ENCODE measurements at regions of chr2 and their contacts with region 1.

Region 1: DNA sequence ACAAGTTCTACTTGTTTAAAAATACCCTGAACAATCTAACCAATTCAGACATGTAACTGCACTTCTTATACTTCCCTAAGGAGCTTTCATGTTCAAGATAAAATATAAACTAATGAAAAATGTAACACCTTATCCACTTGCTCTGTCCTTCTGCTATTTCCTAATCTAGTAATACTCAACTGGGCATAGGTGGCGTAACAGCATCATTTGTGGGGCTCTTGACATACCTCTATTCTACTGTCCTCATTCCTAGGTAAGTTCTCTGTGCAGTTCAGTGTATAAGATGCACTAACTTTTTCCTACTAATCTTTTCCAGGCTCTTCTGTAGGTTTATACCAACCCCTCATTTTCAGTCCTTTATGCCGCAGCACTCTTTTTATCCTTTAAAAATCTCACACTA is 36.7 kb downstream of the PRKD3 start:
- DNase-seq: peak; percentile 34
- ATAC-seq: peak; percentile 54
- H3K4me3 ChIP-seq: no peak overlapping the region
- H3K4me3 Mint-ChIP-seq: no peak overlapping the region
- H3K27ac ChIP-seq: no peak overlapping the region
- H3K27ac Mint-ChIP-seq: no peak overlapping the region
- H3K4me1 ChIP-seq: no peaks in the 10 kb centered on the region
- H3K4me1 Mint-ChIP-seq: peaks cover 14% of the 10 kb centered on the region
- H3K27me3 ChIP-seq: no peaks in the 10 kb centered on the region
- H3K27me3 Mint-ChIP-seq: no peaks in the 10 kb centered on the region
- CTCF ChIP-seq: no peak

Region 2: GRCh38 chr2:35731674-35732073 is 1556.3 kb before region 1 on chr2:
- CTCF ChIA-PET with region 1: no interaction called
- POLR2A ChIA-PET with region 1: no interaction called
- intact Hi-C with region 1: no loop called
- DNase-seq: no peak
- ATAC-seq: no peak
- H3K4me3 ChIP-seq: no peak overlapping the region
- H3K4me3 Mint-ChIP-seq: no peak overlapping the region
- H3K27ac ChIP-seq: no peak overlapping the region
- H3K27ac Mint-ChIP-seq: no peak overlapping the region
- H3K4me1 ChIP-seq: no peaks in the 10 kb centered on the region
- H3K4me1 Mint-ChIP-seq: no peaks in the 10 kb centered on the region
- H3K27me3 ChIP-seq: no peaks in the 10 kb centered on the region
- H3K27me3 Mint-ChIP-seq: no peaks in the 10 kb centered on the region
- CTCF ChIP-seq: no peak

Region 3: GRCh38 chr2:37125416-37125815 is 162.6 kb before region 1 on chr2:
- CTCF ChIA-PET with region 1: no interaction called
- POLR2A ChIA-PET with region 1: no interaction called
- intact Hi-C with region 1: no loop called
- DNase-seq: no peak
- ATAC-seq: no peak
- H3K4me3 ChIP-seq: no peak overlapping the region
- H3K4me3 Mint-ChIP-seq: no peak overlapping the region
- H3K27ac ChIP-seq: no peak overlapping the region
- H3K27ac Mint-ChIP-seq: no peak overlapping the region
- H3K4me1 ChIP-seq: no peaks in the 10 kb centered on the region
- H3K4me1 Mint-ChIP-seq: no peaks in the 10 kb centered on the region
- H3K27me3 ChIP-seq: no peaks in the 10 kb centered on the region
- H3K27me3 Mint-ChIP-seq: no peaks in the 10 kb centered on the region
- CTCF ChIP-seq: no peak

Region 4: DNA sequence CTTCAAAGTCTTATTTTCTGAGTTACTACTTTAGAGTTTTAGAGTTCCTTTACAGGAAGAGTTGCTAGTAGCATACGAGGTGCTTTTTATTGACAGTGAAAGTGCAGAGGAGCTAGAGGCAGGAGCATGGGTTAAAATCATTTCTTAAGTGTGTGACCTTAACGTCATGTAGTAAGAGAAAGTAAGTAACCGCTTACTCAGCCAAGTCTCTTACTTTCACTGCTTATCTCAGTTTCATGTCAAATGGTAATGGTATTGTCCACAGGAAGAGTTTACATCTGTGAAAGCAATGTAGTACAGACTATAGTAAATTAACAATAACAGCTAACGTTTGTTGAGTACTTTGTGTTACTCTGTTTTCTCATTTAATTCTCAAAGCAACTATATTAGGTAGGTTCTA is 43.9 kb before region 1 on chr2:
- CTCF ChIA-PET with region 1: no interaction called
- POLR2A ChIA-PET with region 1: no interaction called
- intact Hi-C with region 1: loop called (anchors 5 kb)
- DNase-seq: no peak
- ATAC-seq: no peak
- H3K4me3 ChIP-seq: no peak overlapping the region
- H3K4me3 Mint-ChIP-seq: no peak overlapping the region
- H3K27ac ChIP-seq: no peak overlapping the region
- H3K27ac Mint-ChIP-seq: peak overlapping the region; percentile 15
- H3K4me1 ChIP-seq: no peaks in the 10 kb centered on the region
- H3K4me1 Mint-ChIP-seq: peaks cover 2% of the 10 kb centered on the region
- H3K27me3 ChIP-seq: no peaks in the 10 kb centered on the region
- H3K27me3 Mint-ChIP-seq: no peaks in the 10 kb centered on the region
- CTCF ChIP-seq: no peak

Region 5: GRCh38 chr2:37263839-37264238 is 24.1 kb before region 1 on chr2:
- CTCF ChIA-PET with region 1: no interaction called
- POLR2A ChIA-PET with region 1: interaction called, 10 read pairs
- intact Hi-C with region 1: no loop called
- DNase-seq: no peak
- ATAC-seq: no peak
- H3K4me3 ChIP-seq: no peak overlapping the region
- H3K4me3 Mint-ChIP-seq: no peak overlapping the region
- H3K27ac ChIP-seq: no peak overlapping the region
- H3K27ac Mint-ChIP-seq: no peak overlapping the region
- H3K4me1 ChIP-seq: peaks cover 10 to 14% of the 10 kb centered on the region in 2 donors
- H3K4me1 Mint-ChIP-seq: peaks cover 21% of the 10 kb centered on the region
- H3K27me3 ChIP-seq: no peaks in the 10 kb centered on the region
- H3K27me3 Mint-ChIP-seq: no peaks in the 10 kb centered on the region
- CTCF ChIP-seq: no peak

Region 6: DNA sequence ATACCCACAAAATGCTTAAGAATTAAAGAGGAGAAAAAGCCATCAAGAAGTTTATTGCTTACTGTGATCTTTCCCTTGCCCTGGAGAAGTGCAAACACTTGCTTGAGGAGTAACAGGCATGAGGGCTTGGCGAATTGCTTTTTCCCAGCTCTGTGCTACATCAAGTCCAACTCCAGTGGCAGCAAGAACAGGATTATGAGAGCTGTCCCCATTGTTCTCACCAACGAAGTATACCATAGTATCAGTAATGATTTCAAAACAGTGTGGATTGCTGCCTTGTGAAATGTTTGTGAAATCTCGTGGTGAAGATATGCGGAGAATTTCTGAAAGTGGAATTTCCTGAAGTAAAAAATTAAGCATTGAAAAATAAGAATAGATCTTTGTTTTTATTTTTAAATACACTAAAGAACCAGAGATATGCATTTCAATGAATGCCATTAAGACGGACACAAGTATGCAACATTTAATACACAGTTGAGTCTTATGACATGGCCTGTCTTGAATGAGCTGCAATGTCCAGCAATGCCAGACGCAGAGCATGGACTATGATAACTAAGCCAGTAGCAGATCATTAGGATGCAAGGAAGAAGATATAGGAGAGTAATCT is 13.5 kb before region 1 on chr2:
- CTCF ChIA-PET with region 1: no interaction called
- POLR2A ChIA-PET with region 1: no interaction called
- intact Hi-C with region 1: no loop called
- DNase-seq: no peak
- ATAC-seq: no peak
- H3K4me3 ChIP-seq: no peak overlapping the region
- H3K4me3 Mint-ChIP-seq: no peak overlapping the region
- H3K27ac ChIP-seq: no peak overlapping the region
- H3K27ac Mint-ChIP-seq: no peak overlapping the region
- H3K4me1 ChIP-seq: no peaks in the 10 kb centered on the region
- H3K4me1 Mint-ChIP-seq: no peaks in the 10 kb centered on the region
- H3K27me3 ChIP-seq: no peaks in the 10 kb centered on the region
- H3K27me3 Mint-ChIP-seq: no peaks in the 10 kb centered on the region
- CTCF ChIP-seq: no peak

Measured in B cell (primary cell).